ENCODE measurements at regions of chr11 and their contacts with region 1.

Region 1: DNA sequence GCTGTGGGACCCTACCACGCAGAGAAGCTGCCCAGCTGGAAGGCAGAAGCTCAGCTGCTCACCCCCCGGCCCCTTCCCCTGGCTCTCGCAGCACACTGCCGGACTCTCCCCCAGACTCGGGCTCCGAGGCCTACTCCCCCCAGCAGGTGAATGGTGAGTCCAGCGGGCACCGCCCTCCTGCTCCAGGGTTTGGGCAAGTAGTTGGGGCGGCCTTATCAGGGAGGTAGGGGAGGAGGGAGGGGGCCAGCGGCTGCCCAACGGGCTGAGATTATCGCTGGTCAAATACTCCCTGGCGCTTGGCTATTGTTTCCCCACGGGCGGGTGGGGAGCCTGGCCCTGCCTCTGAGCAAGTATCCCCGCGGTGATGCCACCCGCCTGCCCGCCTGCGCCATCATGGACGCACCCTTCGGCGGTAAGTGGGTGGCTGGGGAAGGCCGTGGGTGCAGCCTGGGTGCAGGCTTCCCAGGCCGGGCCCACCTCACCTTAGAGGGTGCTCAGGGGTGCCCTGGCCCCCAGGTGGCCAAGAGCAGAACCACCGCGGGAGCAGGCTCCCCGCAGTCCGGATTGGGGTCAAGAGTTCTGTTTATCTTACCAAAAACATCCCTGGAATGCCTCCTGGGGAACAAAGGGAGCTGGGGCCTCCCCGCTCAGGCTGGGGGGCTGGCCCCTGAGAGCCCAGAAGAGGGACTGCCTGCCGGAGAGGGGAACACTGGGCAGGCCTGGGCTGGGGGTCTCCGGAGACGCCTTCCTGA is 16.9 kb downstream of the MYRF start:
- DNase-seq: peak in 1 of 2 experiments; percentile 17
- H3K4me3 ChIP-seq: no peak overlapping the region
- H3K27ac ChIP-seq: no peak overlapping the region
- H3K4me1 ChIP-seq: peaks cover 6% of the 10 kb centered on the region
- H3K27me3 ChIP-seq: no peaks in the 10 kb centered on the region
- CTCF ChIP-seq: peak; percentile 29; the same call in 1 of the 2 replicates

Region 2: GRCh38 chr11:61439615-61440014 is 329.7 kb before region 1 on chr11:
- CTCF ChIA-PET with region 1: no interaction called
- POLR2A ChIA-PET with region 1: no interaction called
- intact Hi-C with region 1: no loop called
- DNase-seq: no peak
- H3K4me3 ChIP-seq: no peak overlapping the region
- H3K27ac ChIP-seq: no peak overlapping the region
- H3K4me1 ChIP-seq: no peaks in the 10 kb centered on the region
- H3K27me3 ChIP-seq: no peaks in the 10 kb centered on the region
- CTCF ChIP-seq: no peak

Region 3: GRCh38 chr11:61834278-61835048 is 65.1 kb after region 1 on chr11:
- CTCF ChIA-PET with region 1: no interaction called
- POLR2A ChIA-PET with region 1: interaction called, 19 read pairs
- intact Hi-C with region 1: no loop called
- DNase-seq: peak in 1 of 2 experiments; percentile 64
- H3K4me3 ChIP-seq: no peak overlapping the region
- H3K27ac ChIP-seq: no peak overlapping the region
- H3K4me1 ChIP-seq: 0 out of 2 replicates have a peak, but pooled peaks cover 5% of the 10 kb centered on the region
- H3K27me3 ChIP-seq: no peaks in the 10 kb centered on the region
- CTCF ChIP-seq: no peak